Thyroid gland (tissue), 4 donors: ENCODE measurements at regions of chr15 and their contacts with region 1.

Region 1: GRCh38 chr15:41811432-41812195 is 16.3 kb upstream of the JMJD7 start:
- DNase-seq: peak; percentile 85 to 87
- H3K4me3 ChIP-seq: no peak overlapping the region
- H3K27ac ChIP-seq: no peak overlapping the region
- H3K4me1 ChIP-seq: peaks cover 4% of the 10 kb centered on the region in 2 donors
- H3K27me3 ChIP-seq: no peaks in the 10 kb centered on the region
- CTCF ChIP-seq: peak; percentile 31 to 93 (median 87)
- POLR2A ChIP-seq: no peak

Region 2: DNA sequence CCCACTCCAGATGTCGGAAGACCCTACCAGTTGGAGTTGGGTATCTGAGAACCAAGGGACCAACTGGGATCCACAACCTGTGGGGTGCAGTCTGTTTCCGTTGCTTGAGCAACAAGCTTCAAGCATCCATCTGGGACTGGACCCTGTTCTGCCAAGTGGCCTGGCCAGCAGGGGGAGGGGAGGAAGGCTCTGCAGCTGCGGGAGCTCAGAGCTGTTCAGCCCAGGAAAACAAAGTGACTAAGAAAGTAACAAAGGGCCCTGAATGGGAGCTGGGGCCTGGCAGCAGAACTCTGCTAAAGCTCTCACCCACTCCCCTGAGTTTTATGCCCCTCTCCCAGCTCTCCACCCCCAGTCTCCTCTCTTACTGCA is 249.9 kb before region 1 on chr15:
- intact Hi-C with region 1: loop called (anchors 10 kb)
- DNase-seq: peak; percentile 16 to 30
- H3K4me3 ChIP-seq: no peak overlapping the region
- H3K27ac ChIP-seq: no peak overlapping the region
- H3K4me1 ChIP-seq: peaks cover 12 to 20% of the 10 kb centered on the region in 2 donors
- H3K27me3 ChIP-seq: no peaks in the 10 kb centered on the region
- CTCF ChIP-seq: no peak
- POLR2A ChIP-seq: no peak

Region 3: DNA sequence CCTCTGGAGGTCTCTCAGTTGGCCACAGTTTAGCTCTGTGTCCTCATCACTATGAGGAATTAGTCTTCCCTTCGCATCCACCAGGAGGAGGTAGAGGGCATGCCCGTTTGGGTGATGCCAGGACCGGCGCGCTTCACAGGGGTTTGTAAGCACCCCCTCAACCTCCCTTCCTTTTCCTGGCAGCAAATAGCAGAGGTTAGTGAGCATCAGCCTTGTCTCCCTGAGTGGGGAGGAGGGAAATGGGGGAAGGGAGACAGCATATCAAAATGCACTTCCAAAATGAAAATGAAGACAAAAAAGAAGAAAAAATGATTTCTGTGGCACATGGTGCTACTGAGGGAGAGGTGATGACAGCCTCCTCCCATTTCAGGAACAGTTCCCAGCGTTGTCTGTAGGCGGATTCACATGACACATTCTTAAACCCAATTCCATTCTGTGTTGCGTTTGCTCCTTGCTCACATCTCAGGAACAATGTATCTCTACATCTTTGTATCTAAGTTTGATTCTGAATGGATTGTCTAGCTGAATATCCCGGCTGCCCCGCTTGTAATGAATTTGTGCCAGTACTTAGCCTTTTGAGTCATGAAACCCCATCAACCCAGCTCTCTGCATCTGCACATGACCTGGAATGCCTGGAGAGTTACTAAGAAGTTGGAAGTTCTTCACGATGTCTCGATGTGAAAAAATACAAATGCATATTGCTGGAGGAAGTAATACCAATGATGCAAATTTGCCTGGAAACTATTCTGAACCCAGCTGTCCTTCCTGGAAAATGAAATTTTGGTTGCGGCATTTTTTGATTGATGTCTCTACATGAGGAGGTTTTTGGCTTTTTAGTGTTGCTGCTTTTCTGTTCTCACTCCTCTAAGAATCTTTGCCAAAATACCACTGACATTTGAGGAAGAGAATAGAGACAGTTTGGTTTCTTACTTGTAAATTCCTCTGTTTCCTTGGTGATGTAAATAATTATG is 207.4 kb before region 1 on chr15:
- intact Hi-C with region 1: loop called (anchors 10 kb)
- DNase-seq: peak; percentile 55 to 67
- H3K4me3 ChIP-seq: no peak overlapping the region
- H3K27ac ChIP-seq: no peak overlapping the region
- H3K4me1 ChIP-seq: no peaks in the 10 kb centered on the region
- H3K27me3 ChIP-seq: no peaks in the 10 kb centered on the region
- CTCF ChIP-seq: peak; percentile 48 to 81 (median 56)
- POLR2A ChIP-seq: no peak

Region 4: GRCh38 chr15:41772684-41773331 is 38.8 kb before region 1 on chr15:
- intact Hi-C with region 1: loop called (anchors 2 kb)
- DNase-seq: peak; percentile 63 to 64
- H3K4me3 ChIP-seq: no peak overlapping the region
- H3K27ac ChIP-seq: no peak overlapping the region
- H3K4me1 ChIP-seq: peaks cover 31 to 37% of the 10 kb centered on the region in 2 donors
- H3K27me3 ChIP-seq: no peaks in the 10 kb centered on the region
- CTCF ChIP-seq: peak; percentile 49 to 93 (median 80)
- POLR2A ChIP-seq: no peak

Region 5: DNA sequence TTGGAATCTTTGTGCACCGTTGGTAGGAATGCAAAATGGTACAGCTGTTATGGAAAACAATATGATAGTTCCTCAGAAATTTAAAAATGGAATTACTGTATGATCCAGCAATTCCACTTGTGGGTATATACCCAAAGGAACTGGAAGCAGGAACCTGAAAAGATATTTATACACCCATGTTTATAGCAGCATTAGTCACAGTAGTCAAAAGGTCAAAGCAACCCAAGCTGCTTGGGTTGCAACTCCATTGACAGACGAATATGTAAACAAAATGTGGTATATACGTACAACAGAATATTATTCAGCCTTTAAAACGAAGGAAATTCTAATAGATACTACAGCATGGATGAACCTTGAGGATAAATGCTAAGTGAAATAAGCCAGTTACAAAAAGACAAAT is 512.7 kb after region 1 on chr15:
- intact Hi-C with region 1: no loop called
- DNase-seq: no peak
- H3K4me3 ChIP-seq: no peak overlapping the region
- H3K27ac ChIP-seq: no peak overlapping the region
- H3K4me1 ChIP-seq: no peaks in the 10 kb centered on the region
- H3K27me3 ChIP-seq: no peaks in the 10 kb centered on the region
- CTCF ChIP-seq: no peak
- POLR2A ChIP-seq: no peak